ENCODE measurements at regions of chr3 and their contacts with region 1.

Region 1: GRCh38 chr3:141452036-141452435 is 34.8 kb upstream of the RASA2 start:
- DNase-seq: no peak
- H3K4me3 ChIP-seq: no peak overlapping the region
- H3K27me3 ChIP-seq: no peaks in the 10 kb centered on the region
- CTCF ChIP-seq: peak; percentile 71

Region 2: DNA sequence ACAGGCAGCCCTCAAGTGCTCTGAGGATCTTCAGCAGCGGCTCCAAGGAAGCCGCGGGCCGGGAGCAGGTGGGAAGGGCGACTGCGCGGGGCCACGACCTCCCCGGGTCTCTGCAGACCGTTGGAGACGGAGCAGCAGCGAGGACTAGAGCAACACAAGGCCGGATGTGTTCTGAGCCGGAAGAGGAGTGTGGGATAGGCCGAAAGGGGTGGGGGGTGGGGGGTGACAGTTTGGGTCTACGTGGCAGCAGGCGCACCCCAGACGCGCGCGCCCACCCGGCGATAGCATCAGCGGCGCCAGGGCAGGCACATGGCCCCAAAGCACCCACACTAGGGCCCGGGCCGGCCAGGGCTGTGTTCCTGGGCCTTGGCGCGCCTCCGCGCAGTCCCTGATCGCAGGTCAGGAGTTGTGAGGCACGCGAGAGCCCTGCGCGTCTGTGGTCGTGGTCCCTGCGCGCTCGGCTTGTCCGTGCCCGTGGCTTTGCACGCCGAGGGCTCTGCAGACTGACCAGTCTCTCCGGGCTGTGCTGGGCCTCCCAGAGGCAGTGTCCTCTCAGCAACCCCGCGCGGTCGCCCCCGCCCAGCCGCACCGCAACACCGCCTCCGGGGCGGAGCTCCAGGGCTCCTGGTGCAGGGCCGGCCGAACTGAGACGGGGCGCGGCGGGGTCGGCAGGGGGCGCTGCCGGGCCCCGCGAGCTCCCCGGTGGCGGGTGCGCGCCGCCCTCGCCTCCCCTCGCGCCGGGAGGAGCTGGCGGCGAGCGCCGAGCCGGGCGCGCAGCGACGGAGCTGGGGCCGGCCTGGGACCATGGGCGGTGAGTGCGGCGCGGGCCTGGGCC is 220.7 kb before region 1 on chr3 and contains the start of gene PXYLP1:
- CTCF ChIA-PET with region 1: interaction called, 12 read pairs
- POLR2A ChIA-PET with region 1: interaction called, 3 read pairs
- DNase-seq: peak; percentile 41
- H3K4me3 ChIP-seq: peak within 1 kb of the TSS; percentile 70
- H3K27me3 ChIP-seq: 0 out of 2 replicates have a peak, but pooled peaks cover 2% of the 10 kb centered on the region
- CTCF ChIP-seq: peak; percentile 24; the same call in 1 of the 2 replicates
- polyA plus RNA-seq, gene PXYLP1: 7.9 and 11.2 TPM in 2 replicates

Region 3: DNA sequence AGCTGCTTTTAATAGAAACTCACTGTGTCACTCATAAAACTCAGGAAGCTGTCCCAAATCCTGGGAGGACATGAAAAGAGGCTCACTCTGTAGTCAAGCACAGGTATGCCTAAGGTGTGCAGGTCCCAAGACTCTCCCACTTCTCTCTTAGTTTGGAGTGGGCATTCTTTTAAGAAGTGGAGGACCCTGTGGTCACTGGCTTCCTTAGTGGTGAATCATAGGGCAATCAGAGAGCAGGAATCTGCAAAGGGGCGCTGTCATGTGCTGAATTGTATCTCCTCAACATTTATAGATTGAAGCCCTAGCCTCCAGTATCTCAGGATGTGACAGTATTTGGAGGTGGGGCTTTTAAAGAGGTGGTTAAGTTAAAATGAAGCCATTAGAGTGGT is 130.9 kb before region 1 on chr3:
- CTCF ChIA-PET with region 1: interaction called, 17 read pairs
- POLR2A ChIA-PET with region 1: no interaction called
- DNase-seq: no peak
- H3K4me3 ChIP-seq: no peak overlapping the region
- H3K27me3 ChIP-seq: no peaks in the 10 kb centered on the region
- CTCF ChIP-seq: no peak

Region 4: DNA sequence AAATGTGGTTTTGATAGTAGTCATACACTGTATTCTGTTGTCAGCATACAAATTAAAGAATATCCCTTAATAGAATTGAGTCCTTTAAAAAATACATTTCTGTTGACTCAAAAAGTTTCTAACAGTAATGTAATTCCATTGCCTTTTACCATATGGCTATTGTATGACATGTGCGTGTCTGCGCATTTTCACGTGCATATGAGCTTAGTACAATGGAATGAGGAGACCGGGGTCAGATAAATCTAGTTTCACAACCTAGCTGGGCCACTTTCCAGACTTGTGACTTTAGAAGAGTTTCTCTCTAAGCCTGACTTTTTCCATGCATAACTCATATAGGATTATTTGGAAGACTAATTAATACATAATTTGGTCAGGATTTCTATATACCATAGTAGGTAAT is 45.0 kb before region 1 on chr3:
- CTCF ChIA-PET with region 1: interaction called, 11 read pairs
- POLR2A ChIA-PET with region 1: interaction called, 6 read pairs
- DNase-seq: peak; percentile 86
- H3K4me3 ChIP-seq: no peak overlapping the region
- H3K27me3 ChIP-seq: no peaks in the 10 kb centered on the region
- CTCF ChIP-seq: no peak

Region 5: DNA sequence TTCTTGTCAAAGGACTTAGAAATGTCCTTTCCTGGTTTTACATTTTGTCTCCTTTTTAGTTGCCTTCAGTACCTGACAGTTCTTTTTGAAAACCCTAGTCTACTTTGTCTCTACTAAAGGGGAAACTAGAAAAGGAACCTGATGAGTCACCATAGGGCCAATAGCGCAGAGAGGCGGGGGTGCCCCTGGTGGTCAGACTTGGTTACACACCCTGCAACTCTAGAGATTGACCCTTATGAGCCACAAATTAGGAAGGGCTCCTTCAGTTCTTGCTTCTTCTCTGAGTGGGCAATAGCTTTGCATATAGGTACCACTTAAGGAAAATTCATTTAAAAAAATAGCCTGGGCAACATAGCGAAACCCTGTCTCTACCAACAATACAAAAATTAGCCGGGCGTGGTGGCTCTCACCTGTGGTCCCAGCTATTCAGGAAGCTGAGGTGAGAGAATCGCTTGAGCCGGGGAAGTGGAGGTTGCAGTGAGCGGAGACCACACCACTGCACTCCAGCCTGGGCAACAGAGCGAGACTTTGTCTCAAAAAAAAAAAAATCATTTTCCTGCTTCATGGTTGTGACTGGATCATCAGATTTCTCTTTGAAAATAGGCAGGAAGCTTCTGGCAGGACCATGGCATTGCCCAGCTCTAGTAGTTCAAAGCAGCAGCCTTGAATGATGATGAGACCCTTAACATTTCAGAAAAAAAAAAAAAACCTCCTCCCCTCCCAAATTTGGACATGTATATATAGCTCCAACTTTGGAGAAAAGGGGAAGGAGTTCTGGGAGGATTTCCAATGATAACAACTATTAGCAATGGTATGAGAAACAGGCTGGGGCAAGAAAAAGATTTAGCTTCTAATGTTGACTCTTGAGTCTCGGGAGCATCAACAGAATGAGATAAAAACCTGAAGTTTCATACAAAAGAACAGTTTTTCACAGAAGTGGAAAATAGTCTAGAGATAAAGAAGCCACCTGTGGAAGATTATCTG is 10.4 kb before region 1 on chr3:
- CTCF ChIA-PET with region 1: interaction called, 28 read pairs
- POLR2A ChIA-PET with region 1: interaction called, 4 read pairs
- DNase-seq: no peak
- H3K4me3 ChIP-seq: no peak overlapping the region
- H3K27me3 ChIP-seq: no peaks in the 10 kb centered on the region
- CTCF ChIP-seq: peak; percentile 82

Region 6: DNA sequence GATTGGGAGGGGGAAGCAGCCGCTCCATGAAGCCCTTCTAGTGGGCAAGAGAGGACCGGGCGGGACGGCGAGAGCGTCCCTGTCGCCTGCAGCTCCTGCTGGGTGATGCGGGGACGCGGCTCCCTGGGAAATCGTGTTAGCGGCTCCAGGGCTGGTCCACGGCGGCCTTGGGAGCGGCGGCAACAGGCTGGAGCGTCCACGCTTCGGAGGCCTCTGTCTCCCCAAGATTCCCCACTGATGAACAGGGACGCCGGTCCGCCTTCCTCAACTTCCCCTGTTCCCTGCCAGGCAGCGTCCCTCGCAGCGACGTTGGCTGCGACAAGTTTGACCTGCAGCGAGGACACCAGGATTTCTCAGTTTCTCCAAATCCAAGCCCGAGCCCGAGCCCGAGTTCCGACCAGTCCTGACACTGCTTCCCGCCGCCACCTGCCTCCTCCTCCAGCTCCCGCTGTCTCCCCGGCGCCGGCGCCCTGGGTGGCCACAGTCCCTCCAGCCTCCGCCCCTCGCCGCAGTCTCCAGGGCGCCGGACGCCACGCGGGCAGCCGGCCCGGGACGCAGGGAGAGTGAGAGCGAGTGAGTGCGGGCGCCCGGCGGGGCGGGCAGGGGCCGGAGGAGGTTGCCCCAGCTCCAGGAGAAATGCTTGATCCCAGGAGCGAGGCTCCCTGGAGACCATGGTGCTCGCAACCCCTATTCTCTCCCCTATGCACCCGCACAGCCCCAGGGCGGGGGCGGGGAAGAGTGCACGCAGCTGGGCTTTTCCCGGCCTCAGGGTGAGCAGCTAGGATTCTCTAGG is 208.0 kb after region 1 on chr3:
- CTCF ChIA-PET with region 1: no interaction called
- POLR2A ChIA-PET with region 1: no interaction called
- DNase-seq: no peak
- H3K4me3 ChIP-seq: peak overlapping the region; percentile 69
- H3K27me3 ChIP-seq: 0 out of 2 replicates have a peak, but pooled peaks cover 2% of the 10 kb centered on the region
- CTCF ChIP-seq: no peak

Measured in BJ (cell line).